Left lung (tissue), 14 donors: ENCODE measurements at regions of chr20 and their contacts with region 1.

Region 1: GRCh38 chr20:49245921-49246740 is 26.9 kb downstream of the DDX27 start:
- DNase-seq: peak in 2 of 4 donors; percentile 11 to 46
- ATAC-seq: peak; percentile 86
- H3K4me3 ChIP-seq: no peak overlapping the region
- H3K27ac ChIP-seq: no peak overlapping the region
- H3K4me1 ChIP-seq: peaks cover 0 to 15% of the 10 kb centered on the region in 2 donors
- H3K27me3 ChIP-seq: no peaks in the 10 kb centered on the region
- CTCF ChIP-seq: peak; percentile 49 to 55

Region 2: GRCh38 chr20:49115600-49115999 is 130.5 kb before region 1 on chr20:
- intact Hi-C with region 1: no loop called
- DNase-seq: no peak
- ATAC-seq: no peak
- H3K4me3 ChIP-seq: no peak overlapping the region
- H3K27ac ChIP-seq: no peak overlapping the region
- H3K4me1 ChIP-seq: no peaks in the 10 kb centered on the region
- H3K27me3 ChIP-seq: no peaks in the 10 kb centered on the region
- CTCF ChIP-seq: no peak

Region 3: DNA sequence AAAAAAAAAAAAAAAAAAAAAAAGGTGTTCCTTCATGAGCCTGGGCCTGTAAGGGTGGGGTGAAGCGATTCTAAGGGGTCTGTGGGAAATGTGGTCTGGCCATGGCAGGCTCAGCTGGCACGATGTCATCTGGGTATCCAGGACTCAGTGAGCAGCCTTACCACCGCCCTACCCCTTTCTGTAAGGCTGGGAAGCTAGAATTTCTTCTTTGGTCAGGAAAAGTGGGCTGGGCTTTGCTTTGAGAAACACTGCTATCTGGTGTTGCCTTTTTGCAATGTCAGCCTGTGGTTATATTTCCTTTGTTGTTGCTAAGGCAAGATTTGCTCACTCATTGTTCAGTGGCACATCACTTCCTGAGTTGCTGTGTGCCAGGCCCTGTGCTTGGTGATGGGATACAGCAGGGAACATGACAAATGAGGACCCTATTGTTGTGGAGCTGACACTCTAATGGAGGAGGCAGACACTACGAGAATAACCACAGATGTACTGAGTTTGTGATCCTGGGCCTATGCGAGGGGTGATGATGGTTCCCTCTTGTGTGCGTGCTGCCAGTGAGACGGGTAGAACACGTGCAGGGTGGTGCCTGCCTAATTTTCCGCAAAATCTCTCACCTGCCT is 77.6 kb after region 1 on chr20:
- intact Hi-C with region 1: loop called in 1 of 2 experiments (anchors 10 kb)
- DNase-seq: peak in 1 of 4 donors; percentile 57
- ATAC-seq: peak; percentile 73
- H3K4me3 ChIP-seq: no peak overlapping the region
- H3K27ac ChIP-seq: peak overlapping the region in 1 of 2 donors; percentile 68
- H3K4me1 ChIP-seq: peaks cover 5 to 20% of the 10 kb centered on the region in 2 donors
- H3K27me3 ChIP-seq: peaks cover 13 to 35% of the 10 kb centered on the region in 2 donors
- CTCF ChIP-seq: no peak

Region 4: GRCh38 chr20:49699200-49699992 is 453.3 kb after region 1 on chr20:
- intact Hi-C with region 1: no loop called
- DNase-seq: no peak
- ATAC-seq: no peak
- H3K4me3 ChIP-seq: no peak overlapping the region
- H3K27ac ChIP-seq: peak overlapping the region in 1 of 2 donors; percentile 52
- H3K4me1 ChIP-seq: peaks cover 17 to 99% of the 10 kb centered on the region in 2 donors
- H3K27me3 ChIP-seq: no peaks in the 10 kb centered on the region
- CTCF ChIP-seq: no peak